ENCODE measurements at regions of chr9 and their contacts with region 1.

Region 1: GRCh38 chr9:107158321-107158720 is 124.8 kb upstream of the RAD23B start:
- DNase-seq: no peak
- ATAC-seq: peak in 4 of 8 donors; percentile 46 to 63 (median 54)
- H3K4me3 ChIP-seq: no peak overlapping the region
- H3K27ac ChIP-seq: no peak overlapping the region
- H3K4me1 ChIP-seq: no peaks in the 10 kb centered on the region
- H3K27me3 ChIP-seq: no peaks in the 10 kb centered on the region
- CTCF ChIP-seq: peak in 7 of 9 donors; percentile 23 to 50 (median 42)

Region 2: GRCh38 chr9:106816524-106816923 is 341.8 kb before region 1 on chr9:
- intact Hi-C with region 1: no loop called
- DNase-seq: no peak
- ATAC-seq: no peak
- H3K4me3 ChIP-seq: no peak overlapping the region
- H3K27ac ChIP-seq: no peak overlapping the region
- H3K4me1 ChIP-seq: no peaks in the 10 kb centered on the region
- H3K27me3 ChIP-seq: no peaks in the 10 kb centered on the region
- CTCF ChIP-seq: no peak

Region 3: GRCh38 chr9:107102677-107103076 is 55.6 kb before region 1 on chr9:
- intact Hi-C with region 1: no loop called
- DNase-seq: no peak
- ATAC-seq: no peak
- H3K4me3 ChIP-seq: no peak overlapping the region
- H3K27ac ChIP-seq: no peak overlapping the region
- H3K4me1 ChIP-seq: no peaks in the 10 kb centered on the region
- H3K27me3 ChIP-seq: no peaks in the 10 kb centered on the region
- CTCF ChIP-seq: no peak

Region 4: GRCh38 chr9:107340920-107341632 is 182.8 kb after region 1 on chr9:
- intact Hi-C with region 1: loop called in 1 of 10 experiments (anchors 10 kb)
- DNase-seq: peak; percentile 73 to 80
- ATAC-seq: peak; percentile 45 to 65 (median 58)
- H3K4me3 ChIP-seq: no peak overlapping the region
- H3K27ac ChIP-seq: no peak overlapping the region
- H3K4me1 ChIP-seq: peaks cover 0 to 40% (median 16%) of the 10 kb centered on the region in 9 donors
- H3K27me3 ChIP-seq: no peaks in the 10 kb centered on the region
- CTCF ChIP-seq: peak; percentile 83 to 93 (median 85)

Measured in heart right ventricle (tissue), 16 donors.